Ascending aorta (tissue), 2 donors: ENCODE measurements at regions of chr4 and their contacts with region 1.

Region 1: GRCh38 chr4:143406523-143406922 is 69.8 kb downstream of the GAB1 start:
- DNase-seq: peak; percentile 67 to 98
- H3K4me3 ChIP-seq: no peak overlapping the region
- H3K27ac ChIP-seq: peak overlapping the region; percentile 49 to 57
- H3K4me1 ChIP-seq: peaks cover 16 to 77% of the 10 kb centered on the region in 2 donors
- H3K27me3 ChIP-seq: no peaks in the 10 kb centered on the region
- CTCF ChIP-seq: no peak

Region 2: DNA sequence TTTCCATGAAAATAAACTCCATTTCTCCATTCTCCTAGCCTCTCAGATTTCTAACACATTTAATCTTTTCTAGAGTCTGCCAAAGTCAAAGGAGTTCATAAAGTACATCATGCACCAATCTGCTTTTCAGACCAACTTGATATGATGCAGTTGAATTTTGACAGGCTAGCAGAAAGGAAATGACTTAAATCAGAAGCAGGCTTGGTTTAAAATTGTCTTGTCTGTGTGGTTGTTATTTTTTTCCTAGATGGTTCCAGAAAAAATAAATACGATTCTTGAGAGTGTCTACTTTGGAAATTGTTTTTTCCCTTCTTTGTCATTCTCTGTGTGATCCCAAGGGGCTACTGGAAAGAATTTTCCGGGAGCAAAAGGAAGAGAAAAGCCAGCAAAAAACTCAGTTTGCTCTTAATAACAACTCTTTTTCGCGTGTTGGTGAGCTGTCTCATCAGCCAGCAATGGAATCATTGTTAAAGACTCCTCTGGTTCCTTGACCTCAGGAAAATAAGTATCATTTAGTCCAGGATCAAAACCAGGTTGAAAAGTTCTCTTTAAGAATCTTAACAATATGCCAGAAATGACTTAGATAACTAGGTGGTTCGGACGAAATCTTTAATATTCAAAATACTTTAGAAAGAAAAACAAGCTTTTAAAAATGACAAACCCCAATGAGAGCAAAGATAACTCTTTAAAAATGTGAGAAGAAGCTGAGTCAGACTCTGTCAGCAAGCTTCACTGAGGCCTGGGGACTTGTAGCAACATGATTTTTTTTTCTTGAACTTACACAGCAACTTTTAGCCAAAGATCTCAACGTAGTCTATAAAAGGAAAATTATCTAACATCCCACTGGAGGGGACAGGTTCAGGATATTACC is 119.6 kb before region 1 on chr4:
- intact Hi-C with region 1: loop called (anchors 5 kb)
- DNase-seq: no peak
- H3K4me3 ChIP-seq: peak overlapping the region in 1 of 2 donors; percentile 22
- H3K27ac ChIP-seq: peak overlapping the region; percentile 74 to 83
- H3K4me1 ChIP-seq: peaks cover 0 to 9% of the 10 kb centered on the region in 2 donors
- H3K27me3 ChIP-seq: no peaks in the 10 kb centered on the region
- CTCF ChIP-seq: no peak

Region 3: GRCh38 chr4:143358923-143359643 is 47.4 kb before region 1 on chr4:
- intact Hi-C with region 1: loop called (anchors 2 kb)
- DNase-seq: no peak
- H3K4me3 ChIP-seq: peak overlapping the region; percentile 14 to 27
- H3K27ac ChIP-seq: peak overlapping the region; percentile 79 to 83
- H3K4me1 ChIP-seq: peaks cover 13 to 65% of the 10 kb centered on the region in 2 donors
- H3K27me3 ChIP-seq: no peaks in the 10 kb centered on the region
- CTCF ChIP-seq: no peak

Region 4: DNA sequence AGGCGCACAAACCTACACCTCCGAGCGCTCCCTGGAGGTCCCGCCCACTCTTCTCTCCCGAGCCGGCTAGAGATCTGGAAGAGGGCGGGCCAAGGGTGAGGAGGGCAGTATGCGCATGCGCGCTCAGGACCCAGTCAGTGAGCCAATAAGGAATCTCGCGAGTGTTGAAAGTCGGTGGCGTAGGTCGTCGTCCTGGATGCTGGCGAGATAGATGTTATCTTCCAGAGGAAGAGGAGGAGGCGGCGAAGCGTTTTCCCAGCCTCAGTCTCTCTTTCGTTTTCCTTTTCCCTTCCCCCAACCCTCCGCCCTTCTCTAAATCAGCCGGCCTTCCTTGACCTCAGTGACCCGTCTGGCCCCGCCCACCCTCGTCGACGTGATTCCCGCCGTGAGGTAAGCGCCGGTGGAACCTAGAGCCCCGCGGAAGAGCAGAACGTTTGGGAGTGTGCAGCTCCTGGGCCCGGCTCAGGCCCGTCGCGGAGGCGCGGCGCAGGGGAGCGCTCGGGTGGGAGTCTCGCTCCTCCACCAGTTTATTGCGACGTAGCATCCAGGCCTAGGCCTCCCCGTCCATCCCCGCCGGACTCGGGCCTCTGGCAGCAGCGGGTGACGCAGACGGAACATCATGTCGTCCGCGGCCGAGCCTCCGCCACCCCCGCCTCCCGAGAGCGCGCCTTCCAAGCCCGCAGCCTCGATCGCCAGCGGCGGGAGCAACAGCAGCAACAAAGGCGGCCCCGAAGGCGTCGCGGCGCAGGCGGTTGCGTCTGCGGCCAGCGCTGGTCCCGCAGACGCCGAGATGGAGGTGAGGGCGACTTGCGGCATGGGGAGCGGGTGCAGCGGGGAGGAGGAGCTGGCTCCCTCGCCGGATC is 107.0 kb after region 1 on chr4 and contains the start of gene SMARCA5:
- intact Hi-C with region 1: loop called (anchors 2 kb)
- DNase-seq: peak; percentile 94 to 99
- H3K4me3 ChIP-seq: peak within 1 kb of the TSS; percentile 65 to 84
- H3K27ac ChIP-seq: peak within 1 kb of the TSS; percentile 97 to 98
- H3K4me1 ChIP-seq: peaks cover 0 to 14% of the 10 kb centered on the region in 2 donors
- H3K27me3 ChIP-seq: no peaks in the 10 kb centered on the region
- CTCF ChIP-seq: no peak
- total RNA-seq, gene SMARCA5: 15.5 TPM